ENCODE measurements at regions of chr19 and their contacts with region 1.

Region 1: DNA sequence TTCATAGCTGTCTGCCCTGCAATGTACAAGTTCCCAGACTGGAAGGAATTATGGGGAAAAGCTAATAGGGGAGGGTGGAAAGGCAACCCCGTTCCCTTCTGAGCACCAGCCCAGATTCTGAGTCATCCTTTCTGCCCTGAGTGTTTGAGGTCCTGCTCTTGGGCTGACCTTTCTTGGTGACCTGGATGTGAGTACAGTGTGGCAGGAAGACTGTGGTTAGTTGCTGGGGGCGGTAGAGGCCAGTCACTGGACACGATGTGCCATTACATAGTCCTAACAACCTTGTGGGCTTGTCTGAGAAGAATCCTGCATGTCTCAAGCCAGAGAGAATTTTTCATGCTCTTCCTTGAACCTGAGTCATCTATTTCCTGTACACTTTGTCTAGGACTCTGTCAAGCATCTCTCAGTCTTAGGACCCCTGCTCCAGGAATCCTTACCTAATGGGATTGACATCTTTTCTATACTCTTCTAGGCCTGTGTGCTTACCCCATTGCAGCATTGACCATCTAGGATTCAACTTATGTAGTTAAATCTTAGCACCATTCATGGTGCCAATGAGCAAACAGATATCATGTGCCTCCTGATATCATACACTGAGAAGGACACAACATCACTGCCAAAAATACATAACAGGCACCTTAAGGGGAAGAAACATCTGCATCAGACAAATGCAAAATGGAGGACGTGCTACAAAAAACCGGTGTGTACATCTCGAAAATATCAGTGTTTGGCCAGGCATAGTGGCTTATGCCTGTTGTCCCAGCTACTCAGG is 8.1 kb upstream of the ANGPTL4 start:
- DNase-seq: no peak
- H3K4me3 ChIP-seq: no peak overlapping the region
- H3K4me3 Mint-ChIP-seq: no peak overlapping the region
- H3K27ac Mint-ChIP-seq: no peak overlapping the region
- H3K4me1 ChIP-seq: peaks cover 13% of the 10 kb centered on the region; the same call in 1 of the 2 replicates
- H3K4me1 Mint-ChIP-seq: no peaks in the 10 kb centered on the region
- H3K27me3 ChIP-seq: no peaks in the 10 kb centered on the region
- H3K27me3 Mint-ChIP-seq: no peaks in the 10 kb centered on the region
- CTCF ChIP-seq: no peak

Region 2: DNA sequence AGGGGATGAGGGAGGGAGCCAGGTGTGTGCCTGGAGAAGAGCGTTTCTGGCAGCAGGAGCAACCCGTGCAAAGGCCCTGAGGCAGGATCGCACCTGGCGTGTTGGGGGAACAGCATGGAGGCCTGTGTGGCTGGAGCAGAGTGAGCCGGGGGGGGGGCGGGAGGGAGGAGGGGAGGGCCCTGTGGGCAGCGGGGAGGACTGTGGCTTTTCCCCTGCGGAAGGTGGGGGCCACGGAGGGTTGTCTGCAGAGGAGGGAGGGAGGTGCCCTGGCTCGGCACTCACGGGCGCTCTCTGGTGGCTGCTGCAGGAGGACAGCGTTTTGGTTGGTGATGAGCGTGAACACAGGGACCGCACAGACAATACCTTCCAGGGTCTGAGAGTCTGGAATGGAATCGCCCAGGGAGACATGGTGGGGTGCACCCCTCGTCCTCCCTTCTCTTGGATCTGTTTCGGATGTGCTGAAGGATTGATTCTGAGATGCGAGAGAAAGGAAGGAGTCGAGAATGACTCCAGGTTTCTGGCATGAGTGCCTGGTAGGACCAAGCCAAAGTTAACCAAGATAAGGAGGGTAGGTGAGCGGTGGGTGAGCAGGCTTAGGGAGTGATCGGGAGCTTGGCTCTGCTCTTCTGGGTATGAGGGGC is 40.9 kb after region 1 on chr19:
- CTCF ChIA-PET with region 1: interaction called, 21 read pairs
- POLR2A ChIA-PET with region 1: no interaction called
- intact Hi-C with region 1: loop called (anchors 2 kb)
- DNase-seq: peak; percentile 51 to 62
- H3K4me3 ChIP-seq: no peak overlapping the region
- H3K4me3 Mint-ChIP-seq: no peak overlapping the region
- H3K27ac Mint-ChIP-seq: peak overlapping the region; percentile 48
- H3K4me1 ChIP-seq: 0 out of 2 replicates have a peak, but pooled peaks cover 5% of the 10 kb centered on the region
- H3K4me1 Mint-ChIP-seq: peaks cover 13% of the 10 kb centered on the region
- H3K27me3 ChIP-seq: no peaks in the 10 kb centered on the region
- H3K27me3 Mint-ChIP-seq: no peaks in the 10 kb centered on the region
- CTCF ChIP-seq: peak; percentile 43 to 51

Region 3: DNA sequence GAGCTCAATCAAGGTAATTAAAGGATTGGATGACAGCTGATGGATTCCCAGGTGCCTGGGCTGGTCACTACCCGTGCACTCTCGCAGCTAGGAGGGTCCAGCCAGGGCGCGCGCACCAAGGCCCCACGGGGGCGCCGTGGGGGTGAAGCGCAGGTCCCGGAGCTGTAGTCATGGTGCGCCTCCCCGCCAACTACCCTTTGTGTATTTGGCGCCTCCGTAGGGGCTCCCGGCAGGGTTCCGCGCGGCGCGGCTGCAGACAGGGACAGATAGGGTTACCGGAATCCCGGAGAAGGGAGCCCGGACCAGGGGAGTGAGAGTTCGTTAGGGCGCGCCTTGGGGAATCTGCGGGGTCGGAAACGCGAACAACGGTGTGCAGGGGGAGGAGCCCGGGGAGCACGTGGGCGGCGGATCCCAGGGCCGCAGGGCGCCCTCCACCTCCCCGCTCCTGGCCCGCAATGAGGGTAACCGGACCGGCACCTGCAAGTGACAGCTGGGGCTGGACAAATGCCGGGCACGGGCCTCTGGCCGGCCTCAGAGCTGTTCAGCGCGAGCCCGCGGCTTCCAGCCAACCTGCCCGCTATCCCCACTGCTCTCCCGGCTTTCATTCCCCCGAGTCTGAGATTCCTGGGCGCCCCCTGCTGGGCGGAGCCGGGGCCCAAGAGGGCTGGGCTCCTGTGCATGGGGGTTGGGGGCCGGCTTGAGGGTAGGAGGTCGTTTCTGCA is 150.0 kb after region 1 on chr19:
- CTCF ChIA-PET with region 1: interaction called, 6 read pairs
- POLR2A ChIA-PET with region 1: no interaction called
- intact Hi-C with region 1: loop called (anchors 1 kb)
- DNase-seq: peak; percentile 78 to 89
- H3K4me3 ChIP-seq: peak overlapping the region; percentile 67
- H3K4me3 Mint-ChIP-seq: peak overlapping the region; percentile 91
- H3K27ac Mint-ChIP-seq: peak overlapping the region; percentile 82
- H3K4me1 ChIP-seq: 0 out of 2 replicates have a peak, but pooled peaks cover 3% of the 10 kb centered on the region
- H3K4me1 Mint-ChIP-seq: no peaks in the 10 kb centered on the region
- H3K27me3 ChIP-seq: no peaks in the 10 kb centered on the region
- H3K27me3 Mint-ChIP-seq: no peaks in the 10 kb centered on the region
- CTCF ChIP-seq: peak; percentile 72 to 91